ENCODE measurements at regions of chr13 and their contacts with region 1.

Region 1: DNA sequence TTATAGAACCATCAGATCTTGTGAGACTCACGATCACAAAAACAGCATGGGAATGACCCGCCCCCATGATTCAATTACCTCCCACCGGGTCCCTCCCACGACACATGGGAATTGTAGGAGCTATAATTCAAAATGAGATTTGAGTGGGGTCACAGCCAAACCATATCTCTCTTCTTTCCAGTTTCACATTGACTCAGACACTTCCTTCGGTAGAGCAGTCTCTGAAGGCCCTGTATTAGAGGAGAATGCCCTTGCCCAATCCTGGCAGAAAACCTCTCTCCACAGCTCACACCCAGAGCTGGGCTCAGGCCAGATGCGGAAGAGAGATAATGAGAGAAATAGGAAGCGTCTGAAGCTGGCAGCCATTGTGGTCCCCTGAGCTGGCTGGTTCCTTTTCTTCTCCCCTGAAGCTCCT is 72.4 kb upstream of the CLDN10 start:
- DNase-seq: peak in 1 of 9 donors; percentile 37
- ATAC-seq: peak; percentile 60
- H3K4me3 ChIP-seq: no peak overlapping the region
- H3K4me3 Mint-ChIP-seq: peak overlapping the region in 3 of 10 donors; percentile 8 to 35 (median 11)
- H3K27ac ChIP-seq: no peak overlapping the region
- H3K27ac Mint-ChIP-seq: peak overlapping the region in 1 of 9 donors; percentile 31
- H3K4me1 ChIP-seq: no peaks in the 10 kb centered on the region
- H3K4me1 Mint-ChIP-seq: peaks cover 0 to 17% (median 0%) of the 10 kb centered on the region in 7 donors
- H3K27me3 ChIP-seq: no peaks in the 10 kb centered on the region
- H3K27me3 Mint-ChIP-seq: peaks cover 0 to 8% (median 0%) of the 10 kb centered on the region in 5 donors

Region 2: GRCh38 chr13:94435604-94436226 is 1044.4 kb before region 1 on chr13:
- CTCF ChIA-PET with region 1: no interaction called
- POLR2A ChIA-PET with region 1: no interaction called
- intact Hi-C with region 1: loop called in 1 of 2 experiments (anchors 1 kb)
- DNase-seq: peak in 7 of 9 donors; percentile 18 to 63 (median 50)
- ATAC-seq: peak; percentile 73
- H3K4me3 ChIP-seq: no peak overlapping the region
- H3K4me3 Mint-ChIP-seq: no peak overlapping the region
- H3K27ac ChIP-seq: no peak overlapping the region
- H3K27ac Mint-ChIP-seq: no peak overlapping the region
- H3K4me1 ChIP-seq: no peaks in the 10 kb centered on the region
- H3K4me1 Mint-ChIP-seq: peaks cover 0 to 16% (median 0%) of the 10 kb centered on the region in 7 donors
- H3K27me3 ChIP-seq: no peaks in the 10 kb centered on the region
- H3K27me3 Mint-ChIP-seq: peaks cover 0 to 3% (median 0%) of the 10 kb centered on the region in 5 donors

Region 3: DNA sequence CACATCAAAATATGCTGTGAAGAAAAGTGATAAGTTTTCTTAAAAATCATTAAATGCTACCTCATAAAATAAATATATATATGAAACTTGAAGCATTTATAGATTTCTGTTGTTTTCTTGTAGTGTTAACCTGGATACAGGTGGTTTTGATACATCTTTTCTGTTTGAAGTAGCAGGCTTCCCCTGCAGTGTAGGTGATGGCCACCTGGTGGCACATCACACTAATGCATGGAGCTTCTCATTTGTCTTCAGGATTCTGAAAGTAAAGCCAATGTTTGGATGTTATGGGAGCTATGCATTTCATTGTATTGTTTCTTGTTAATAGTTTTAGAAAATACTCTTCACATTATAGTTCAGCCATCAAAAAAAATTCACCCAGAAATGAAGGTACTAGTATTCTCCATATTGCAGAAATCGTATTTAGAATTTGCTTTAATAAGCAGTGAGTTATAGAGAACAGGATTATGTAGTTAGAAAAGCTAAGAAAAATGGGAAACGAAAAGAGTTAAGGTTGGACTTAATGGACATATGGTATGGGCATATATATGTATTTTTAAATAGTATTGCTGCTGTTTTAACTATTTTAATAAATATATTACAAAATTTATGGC is 859.7 kb before region 1 on chr13:
- CTCF ChIA-PET with region 1: no interaction called
- POLR2A ChIA-PET with region 1: no interaction called
- intact Hi-C with region 1: loop called in 1 of 2 experiments (anchors 2 kb)
- DNase-seq: peak in 3 of 9 donors; percentile 19 to 32 (median 26)
- ATAC-seq: peak; percentile 73
- H3K4me3 ChIP-seq: no peak overlapping the region
- H3K4me3 Mint-ChIP-seq: no peak overlapping the region
- H3K27ac ChIP-seq: no peak overlapping the region
- H3K27ac Mint-ChIP-seq: peak overlapping the region in 1 of 9 donors; percentile 8
- H3K4me1 ChIP-seq: no peaks in the 10 kb centered on the region
- H3K4me1 Mint-ChIP-seq: peaks cover 0 to 16% (median 13%) of the 10 kb centered on the region in 7 donors
- H3K27me3 ChIP-seq: no peaks in the 10 kb centered on the region
- H3K27me3 Mint-ChIP-seq: no peaks in the 10 kb centered on the region

Region 4: GRCh38 chr13:94674609-94675348 is 805.4 kb before region 1 on chr13:
- CTCF ChIA-PET with region 1: interaction called, 5 read pairs
- POLR2A ChIA-PET with region 1: no interaction called
- intact Hi-C with region 1: loop called (anchors 1 to 2 kb)
- DNase-seq: peak in 7 of 9 donors; percentile 12 to 49 (median 34)
- ATAC-seq: peak; percentile 55
- H3K4me3 ChIP-seq: no peak overlapping the region
- H3K4me3 Mint-ChIP-seq: no peak overlapping the region
- H3K27ac ChIP-seq: no peak overlapping the region
- H3K27ac Mint-ChIP-seq: no peak overlapping the region
- H3K4me1 ChIP-seq: no peaks in the 10 kb centered on the region
- H3K4me1 Mint-ChIP-seq: no peaks in the 10 kb centered on the region
- H3K27me3 ChIP-seq: no peaks in the 10 kb centered on the region
- H3K27me3 Mint-ChIP-seq: peaks cover 12 to 31% (median 20%) of the 10 kb centered on the region in 5 donors

Region 5: DNA sequence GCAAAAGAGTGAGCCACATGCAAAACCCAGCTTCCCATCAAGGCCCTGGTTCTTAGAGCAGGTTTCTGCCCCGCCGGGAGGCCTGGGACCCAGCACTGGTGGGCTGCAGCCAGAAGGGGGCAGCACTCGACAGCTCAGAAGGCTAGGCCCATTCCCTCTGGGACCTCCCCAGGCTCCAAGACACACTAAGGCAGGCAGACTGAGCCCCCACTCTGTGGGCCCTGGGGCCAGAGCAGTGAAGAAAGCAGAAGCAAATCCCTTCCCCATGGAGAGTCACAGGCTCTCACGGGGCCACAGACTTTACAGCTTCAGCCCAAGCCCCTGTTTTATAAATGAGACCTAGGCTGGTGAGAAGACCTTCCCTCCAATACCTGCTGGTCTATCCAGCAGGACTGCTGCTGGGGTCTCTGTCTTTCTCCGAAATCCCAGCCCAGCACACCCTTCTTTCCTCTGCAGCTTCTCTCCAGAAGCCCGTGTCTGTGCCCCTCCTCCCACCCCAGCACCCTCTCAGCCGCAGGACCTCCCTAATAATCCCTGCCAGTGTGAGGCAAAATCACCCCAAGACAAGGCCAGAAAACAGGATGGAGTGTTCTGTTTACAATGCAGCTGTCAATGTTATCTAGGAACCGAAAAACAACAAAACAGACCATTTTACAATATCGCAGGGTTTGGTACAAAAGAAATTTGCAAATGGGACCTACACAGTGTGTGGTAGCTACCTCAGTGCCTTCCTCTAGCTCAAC is 288.1 kb before region 1 on chr13:
- CTCF ChIA-PET with region 1: interaction called, 6 read pairs
- POLR2A ChIA-PET with region 1: no interaction called
- intact Hi-C with region 1: loop called (anchors 1 kb)
- DNase-seq: peak in 8 of 9 donors; percentile 12 to 67 (median 36)
- ATAC-seq: peak; percentile 73
- H3K4me3 ChIP-seq: no peak overlapping the region
- H3K4me3 Mint-ChIP-seq: no peak overlapping the region
- H3K27ac ChIP-seq: no peak overlapping the region
- H3K27ac Mint-ChIP-seq: peak overlapping the region in 3 of 9 donors; percentile 20 to 69 (median 32)
- H3K4me1 ChIP-seq: peaks cover 0 to 2% of the 10 kb centered on the region in 2 donors
- H3K4me1 Mint-ChIP-seq: peaks cover 2 to 21% (median 19%) of the 10 kb centered on the region in 7 donors
- H3K27me3 ChIP-seq: no peaks in the 10 kb centered on the region
- H3K27me3 Mint-ChIP-seq: no peaks in the 10 kb centered on the region

Region 6: GRCh38 chr13:95301183-95301967 is 178.8 kb before region 1 on chr13 and contains the start of gene ABCC4:
- CTCF ChIA-PET with region 1: no interaction called
- POLR2A ChIA-PET with region 1: no interaction called
- intact Hi-C with region 1: loop called (anchors 1 to 2 kb)
- DNase-seq: peak; percentile 22 to 78 (median 48)
- ATAC-seq: peak; percentile 86
- H3K4me3 ChIP-seq: peak within 1 kb of the TSS; percentile 50
- H3K4me3 Mint-ChIP-seq: peak within 1 kb of the TSS; percentile 84 to 96 (median 87)
- H3K27ac ChIP-seq: peak within 1 kb of the TSS; percentile 41
- H3K27ac Mint-ChIP-seq: peak within 1 kb of the TSS in 8 of 9 donors; percentile 6 to 86 (median 66)
- H3K4me1 ChIP-seq: peaks cover 0 to 5% of the 10 kb centered on the region in 2 donors
- H3K4me1 Mint-ChIP-seq: peaks cover 7 to 41% (median 27%) of the 10 kb centered on the region in 7 donors
- H3K27me3 ChIP-seq: no peaks in the 10 kb centered on the region
- H3K27me3 Mint-ChIP-seq: peaks cover 0 to 15% (median 0%) of the 10 kb centered on the region in 5 donors
- total RNA-seq, gene ABCC4: 5.8 to 9.2 (median 7.5) TPM

Region 7: GRCh38 chr13:95463531-95463930 is 16.6 kb before region 1 on chr13:
- CTCF ChIA-PET with region 1: no interaction called
- POLR2A ChIA-PET with region 1: no interaction called
- intact Hi-C with region 1: no loop called
- DNase-seq: no peak
- ATAC-seq: no peak
- H3K4me3 ChIP-seq: no peak overlapping the region
- H3K4me3 Mint-ChIP-seq: no peak overlapping the region
- H3K27ac ChIP-seq: no peak overlapping the region
- H3K27ac Mint-ChIP-seq: no peak overlapping the region
- H3K4me1 ChIP-seq: no peaks in the 10 kb centered on the region
- H3K4me1 Mint-ChIP-seq: no peaks in the 10 kb centered on the region
- H3K27me3 ChIP-seq: no peaks in the 10 kb centered on the region
- H3K27me3 Mint-ChIP-seq: peaks cover under 1 to 7% (median 3%) of the 10 kb centered on the region in 5 donors

Region 8: DNA sequence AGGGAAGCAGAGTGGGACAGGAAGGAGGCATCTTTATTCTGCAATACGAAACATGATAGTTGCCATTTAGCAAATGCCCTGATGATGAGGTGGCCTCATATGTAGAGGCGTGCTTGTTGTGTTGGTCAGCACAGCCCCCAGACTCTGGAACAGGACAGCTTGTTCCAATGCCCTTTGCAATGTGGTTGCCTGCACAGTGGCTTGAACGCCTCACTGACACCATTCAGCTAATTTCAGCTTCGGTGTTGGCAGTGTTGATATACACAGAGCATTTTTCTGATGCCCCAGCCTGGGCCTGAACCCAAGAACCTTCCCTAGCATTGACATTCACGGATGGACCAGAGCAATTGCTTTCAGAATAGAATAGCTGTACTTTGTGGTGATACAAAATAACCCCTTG is 743.1 kb after region 1 on chr13:
- CTCF ChIA-PET with region 1: no interaction called
- POLR2A ChIA-PET with region 1: no interaction called
- intact Hi-C with region 1: no loop called
- DNase-seq: no peak
- ATAC-seq: no peak
- H3K4me3 ChIP-seq: no peak overlapping the region
- H3K4me3 Mint-ChIP-seq: no peak overlapping the region
- H3K27ac ChIP-seq: no peak overlapping the region
- H3K27ac Mint-ChIP-seq: no peak overlapping the region
- H3K4me1 ChIP-seq: no peaks in the 10 kb centered on the region
- H3K4me1 Mint-ChIP-seq: peaks cover 0 to 4% (median 0%) of the 10 kb centered on the region in 7 donors
- H3K27me3 ChIP-seq: no peaks in the 10 kb centered on the region
- H3K27me3 Mint-ChIP-seq: no peaks in the 10 kb centered on the region